Right ventricle myocardium inferior (tissue), 1 donor: ENCODE measurements at regions of chr1 and their contacts with region 1.

Region 1: GRCh38 chr1:10796019-10796944 is at the start of gene CASZ1:
- DNase-seq: no peak
- ATAC-seq: peak; percentile 56
- total RNA-seq, gene CASZ1: 58.2 TPM

Region 2: DNA sequence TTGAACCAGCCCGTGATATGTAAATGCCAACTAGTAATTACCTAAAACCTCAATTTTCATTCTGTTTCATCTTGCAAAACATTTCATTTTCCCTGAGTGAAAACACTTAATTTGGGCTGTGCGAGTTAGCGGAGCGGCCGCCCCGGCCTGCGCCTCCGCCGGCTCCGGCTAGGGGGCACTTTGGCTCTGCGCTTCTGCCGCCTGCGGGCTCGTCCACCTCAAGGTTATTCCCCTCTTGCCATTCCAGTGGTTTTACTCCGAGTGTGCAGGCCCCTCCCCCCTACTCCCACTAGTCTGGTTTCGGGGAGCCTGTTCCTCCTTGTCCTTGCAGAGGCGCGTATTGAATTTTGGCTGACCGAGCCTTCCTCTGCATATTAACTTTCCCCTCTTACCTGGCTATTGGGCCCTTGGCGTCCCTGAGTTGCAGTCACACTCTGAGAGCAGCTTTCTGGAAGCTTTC is 266.0 kb before region 1 on chr1:
- intact Hi-C with region 1: loop called (anchors 5 kb)
- DNase-seq: no peak
- ATAC-seq: peak; percentile 30

Region 3: DNA sequence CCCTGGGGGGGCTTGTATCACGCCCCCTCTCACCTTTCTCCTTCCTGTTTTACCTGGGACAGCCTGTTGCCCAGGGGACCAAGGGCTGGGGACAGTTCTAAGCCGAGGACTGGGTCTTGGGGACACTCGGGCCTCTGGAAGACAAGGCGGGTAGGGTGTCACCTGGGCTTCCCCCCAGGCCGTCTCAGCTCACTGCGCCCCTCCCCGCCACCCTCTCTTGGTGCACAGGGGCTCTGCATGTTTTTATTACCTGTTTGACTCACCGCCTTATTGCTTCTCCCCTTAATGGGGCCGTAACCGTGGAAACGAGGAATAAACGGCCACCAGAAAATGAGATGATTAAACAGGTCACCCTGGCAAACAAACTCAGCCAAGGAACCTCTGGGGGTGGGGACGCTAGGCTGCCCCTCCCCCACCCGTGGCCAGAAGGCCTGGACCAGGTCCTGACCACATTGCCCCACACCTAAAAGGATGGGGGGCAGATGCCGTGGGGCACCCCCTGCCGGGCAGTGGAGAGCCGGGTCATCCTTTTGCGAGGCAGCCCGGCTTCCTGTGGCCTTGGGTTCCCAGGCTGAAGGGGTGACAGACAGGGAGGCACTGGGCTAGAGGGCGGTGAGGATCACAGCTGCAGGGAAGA is 109.8 kb before region 1 on chr1:
- intact Hi-C with region 1: no loop called
- DNase-seq: no peak
- ATAC-seq: no peak

Region 4: GRCh38 chr1:10823000-10823401 is 26.7 kb after region 1 on chr1:
- intact Hi-C with region 1: loop called (anchors 1 kb)
- DNase-seq: no peak
- ATAC-seq: peak; percentile 3

Region 5: GRCh38 chr1:10856863-10857598 is 60.7 kb after region 1 on chr1:
- intact Hi-C with region 1: loop called (anchors 2 kb)
- DNase-seq: peak; percentile 42
- ATAC-seq: no peak